Activated naive CD4-positive, alpha-beta T cell treated with anti-CD3 and anti-CD28 coated beads, Interleukin-2, amount 10 ng/mL, durations not matched to agents 7 days and 5 days (primary cell): ENCODE measurements at regions of chr1 and their contacts with region 1.

Region 1: DNA sequence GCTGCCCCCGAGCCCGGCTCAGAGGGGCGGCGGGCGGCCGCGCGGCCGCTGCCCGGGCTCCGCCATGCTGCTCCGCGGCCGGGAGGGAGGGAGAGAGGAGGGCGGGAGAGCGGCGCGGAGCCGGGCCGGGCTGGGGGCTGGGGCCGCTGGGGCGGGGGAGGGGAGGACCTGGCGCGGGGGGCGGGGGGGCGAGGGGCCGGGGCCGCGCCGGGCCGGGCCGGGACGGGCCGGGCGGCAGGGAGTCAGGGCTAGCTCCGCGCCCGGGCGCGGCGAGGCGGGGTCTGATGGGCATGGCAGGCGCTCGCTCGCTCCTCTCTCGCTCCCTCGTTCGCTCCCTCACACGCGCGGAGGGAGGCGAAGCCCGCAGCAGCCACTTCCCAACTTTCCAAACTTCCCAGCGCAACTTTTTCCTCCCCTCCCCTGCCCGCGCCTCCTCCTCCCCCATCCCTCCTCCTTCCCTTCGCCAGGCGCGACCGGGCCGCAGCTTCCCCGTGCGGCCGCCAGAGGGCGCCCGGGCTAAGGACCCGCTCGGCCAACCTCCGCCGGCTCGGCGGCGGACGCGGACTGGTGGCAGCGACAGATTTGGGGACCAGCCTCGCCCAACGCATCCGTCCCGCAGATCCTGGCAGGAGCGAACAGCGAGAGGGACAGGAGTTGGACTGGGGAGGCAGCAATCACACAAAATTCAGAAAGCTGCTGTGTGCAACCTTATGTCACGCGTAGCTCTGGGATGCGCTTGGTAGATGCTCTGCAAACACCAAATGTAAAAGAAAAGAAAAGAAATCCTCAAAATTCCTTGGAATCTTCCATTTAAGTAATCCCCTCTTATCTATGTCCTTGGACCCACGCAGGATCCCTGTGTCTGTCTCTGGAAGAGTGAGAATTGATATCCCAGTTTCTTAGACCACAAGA is at the start of gene TRABD2B:
- DNase-seq: peak; percentile 66
- H3K4me3 Mint-ChIP-seq: peak within 1 kb of the TSS; percentile 37
- H3K27ac Mint-ChIP-seq: no peak within 1 kb of the TSS
- H3K4me1 Mint-ChIP-seq: peaks cover 2% of the 10 kb centered on the region
- H3K27me3 Mint-ChIP-seq: peaks cover 66% of the 10 kb centered on the region

Region 2: GRCh38 chr1:47963568-47964358 is 33.8 kb before region 1 on chr1:
- CTCF ChIA-PET with region 1: no interaction called
- DNase-seq: no peak
- H3K4me3 Mint-ChIP-seq: no peak overlapping the region
- H3K27ac Mint-ChIP-seq: no peak overlapping the region
- H3K4me1 Mint-ChIP-seq: no peaks in the 10 kb centered on the region
- H3K27me3 Mint-ChIP-seq: no peaks in the 10 kb centered on the region

Region 3: DNA sequence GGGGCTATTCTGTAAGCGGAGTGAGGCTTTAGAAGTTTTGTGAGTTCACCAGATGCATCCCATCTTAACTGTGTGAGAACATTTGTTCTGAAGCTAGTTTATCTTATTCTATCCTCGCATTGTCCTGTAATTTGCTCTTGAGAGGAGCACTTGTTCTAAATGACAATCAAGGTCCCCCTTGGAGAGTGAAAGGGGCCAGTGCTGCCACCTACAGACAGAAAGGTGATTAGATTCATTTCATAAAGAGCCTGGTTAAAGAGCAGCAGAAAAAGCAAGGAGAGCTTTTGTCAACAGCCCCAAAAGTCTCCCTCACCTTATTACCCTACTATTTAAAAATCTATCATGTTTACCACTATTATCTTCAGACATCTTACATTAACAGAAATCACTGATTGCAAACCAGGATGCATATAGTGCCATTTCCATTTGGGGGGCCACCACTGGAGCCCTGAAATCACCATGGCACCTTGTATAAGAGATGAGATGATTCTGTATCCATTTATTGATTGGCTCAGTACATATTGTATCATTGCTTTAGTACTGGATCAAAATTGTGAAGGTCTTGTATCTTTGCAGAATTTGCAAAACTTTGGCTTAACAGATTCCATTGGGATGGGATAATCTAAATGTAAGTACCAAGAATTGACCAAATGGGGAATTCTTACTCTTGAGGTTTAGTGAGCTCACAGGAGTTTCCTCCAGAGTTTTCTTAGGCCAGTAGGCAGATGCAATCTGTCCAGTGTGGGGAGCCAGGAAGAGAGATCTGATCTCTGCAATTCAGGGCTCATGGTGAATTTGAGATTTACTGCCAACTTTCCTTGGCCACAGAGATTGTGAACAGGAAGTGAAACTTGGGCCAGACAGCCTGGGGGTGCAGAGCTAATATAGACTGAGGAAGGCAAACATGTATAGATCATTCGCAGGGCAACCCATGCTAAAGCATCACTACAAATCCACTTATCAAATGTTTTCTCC is 63.9 kb after region 1 on chr1:
- CTCF ChIA-PET with region 1: interaction called, 23 read pairs
- DNase-seq: peak; percentile 28
- H3K4me3 Mint-ChIP-seq: no peak overlapping the region
- H3K27ac Mint-ChIP-seq: no peak overlapping the region
- H3K4me1 Mint-ChIP-seq: no peaks in the 10 kb centered on the region
- H3K27me3 Mint-ChIP-seq: no peaks in the 10 kb centered on the region